ENCODE measurements at regions of chr3 and their contacts with region 1.

Region 1: DNA sequence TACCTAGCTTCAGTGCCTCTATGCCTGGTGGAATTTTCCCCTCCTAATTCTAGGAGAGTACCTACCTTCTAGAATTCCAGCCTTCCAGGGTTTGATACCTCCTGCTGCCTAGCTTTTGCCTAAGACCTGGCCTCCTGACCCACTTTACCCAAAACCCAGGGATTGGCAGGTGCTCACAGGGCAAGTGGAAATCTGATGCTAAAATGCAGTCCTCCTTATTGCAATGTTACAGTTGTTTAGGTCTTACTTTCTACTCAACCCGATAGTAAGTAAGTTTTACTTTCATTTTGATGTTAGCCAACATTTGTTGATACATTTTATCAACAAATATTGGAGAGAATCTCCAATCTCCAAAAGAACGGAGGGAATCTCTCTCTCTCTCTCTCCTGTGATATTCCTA is 275.9 kb downstream of the DOCK3 start:
- DNase-seq: no peak
- ATAC-seq: no peak
- H3K4me3 ChIP-seq: no peak overlapping the region
- H3K27ac ChIP-seq: no peak overlapping the region
- H3K4me1 ChIP-seq: no peaks in the 10 kb centered on the region
- H3K27me3 ChIP-seq: no peaks in the 10 kb centered on the region
- CTCF ChIP-seq: no peak
- POLR2A ChIP-seq: no peak
- RAD21 ChIP-seq: no peak

Region 2: GRCh38 chr3:50777680-50778079 is 172.9 kb before region 1 on chr3:
- CTCF ChIA-PET with region 1: no interaction called
- POLR2A ChIA-PET with region 1: no interaction called
- RAD21 ChIA-PET with region 1: no interaction called
- intact Hi-C with region 1: no loop called
- DNase-seq: no peak
- ATAC-seq: no peak
- H3K4me3 ChIP-seq: no peak overlapping the region
- H3K27ac ChIP-seq: no peak overlapping the region
- H3K4me1 ChIP-seq: no peaks in the 10 kb centered on the region
- H3K27me3 ChIP-seq: no peaks in the 10 kb centered on the region
- CTCF ChIP-seq: no peak
- POLR2A ChIP-seq: no peak
- RAD21 ChIP-seq: no peak

Region 3: DNA sequence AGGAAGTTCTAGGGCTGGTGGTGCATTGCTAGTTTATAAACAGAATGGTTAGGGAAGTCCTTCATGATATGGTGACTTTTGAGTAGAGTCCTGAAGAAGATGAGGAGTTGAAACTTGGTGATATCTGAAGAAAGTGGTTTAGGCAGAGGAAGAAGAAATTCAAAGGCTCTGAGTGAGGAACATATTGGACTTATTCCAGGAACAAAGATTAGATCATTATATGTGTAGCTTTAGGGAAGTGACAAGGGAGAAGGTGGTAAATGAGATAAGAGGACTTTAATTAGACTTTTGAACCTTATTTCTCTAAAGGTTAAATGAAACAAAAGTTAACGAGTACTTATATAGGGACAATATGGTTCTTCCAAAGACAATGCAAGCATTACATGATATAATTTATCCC is 10.8 kb after region 1 on chr3:
- CTCF ChIA-PET with region 1: no interaction called
- POLR2A ChIA-PET with region 1: no interaction called
- RAD21 ChIA-PET with region 1: no interaction called
- intact Hi-C with region 1: loop called (anchors 2 kb)
- DNase-seq: no peak
- ATAC-seq: no peak
- H3K4me3 ChIP-seq: no peak overlapping the region
- H3K27ac ChIP-seq: no peak overlapping the region
- H3K4me1 ChIP-seq: no peaks in the 10 kb centered on the region
- H3K27me3 ChIP-seq: no peaks in the 10 kb centered on the region
- CTCF ChIP-seq: no peak
- POLR2A ChIP-seq: no peak
- RAD21 ChIP-seq: no peak